T-cell (primary cell): ENCODE measurements at regions of chr14 and their contacts with region 1.

Region 1: GRCh38 chr14:66359500-66359899 is 126.7 kb upstream of the CCDC196 start:
- DNase-seq: peak in 15 of 35 experiments; percentile 0 to 78 (median 13)
- ATAC-seq: peak in 1 of 4 experiments; percentile 34
- H3K4me3 ChIP-seq: no peak overlapping the region
- H3K4me3 Mint-ChIP-seq: no peak overlapping the region
- H3K27ac ChIP-seq: no peak overlapping the region
- H3K27ac Mint-ChIP-seq: no peak overlapping the region
- H3K4me1 ChIP-seq: no peaks in the 10 kb centered on the region
- H3K4me1 Mint-ChIP-seq: no peaks in the 10 kb centered on the region
- H3K27me3 ChIP-seq: no peaks in the 10 kb centered on the region
- H3K27me3 Mint-ChIP-seq: no peaks in the 10 kb centered on the region

Region 2: GRCh38 chr14:66311990-66312389 is 47.5 kb before region 1 on chr14:
- CTCF ChIA-PET with region 1: interaction called in 1 of 2 experiments, 10 read pairs
- POLR2A ChIA-PET with region 1: no interaction called
- DNase-seq: no peak
- ATAC-seq: no peak
- H3K4me3 ChIP-seq: no peak overlapping the region
- H3K4me3 Mint-ChIP-seq: no peak overlapping the region
- H3K27ac ChIP-seq: no peak overlapping the region
- H3K27ac Mint-ChIP-seq: no peak overlapping the region
- H3K4me1 ChIP-seq: no peaks in the 10 kb centered on the region
- H3K4me1 Mint-ChIP-seq: no peaks in the 10 kb centered on the region
- H3K27me3 ChIP-seq: peaks cover 0 to 6% of the 10 kb centered on the region in 2 experiments
- H3K27me3 Mint-ChIP-seq: peaks cover 0 to 4% of the 10 kb centered on the region in 2 donors

Region 3: GRCh38 chr14:66403183-66403582 is 43.7 kb after region 1 on chr14:
- CTCF ChIA-PET with region 1: interaction called, 8 to 26 read pairs
- POLR2A ChIA-PET with region 1: no interaction called
- DNase-seq: peak in 1 of 35 experiments; percentile 40
- ATAC-seq: peak in 3 of 4 experiments; percentile 30 to 48 (median 35)
- H3K4me3 ChIP-seq: no peak overlapping the region
- H3K4me3 Mint-ChIP-seq: no peak overlapping the region
- H3K27ac ChIP-seq: no peak overlapping the region
- H3K27ac Mint-ChIP-seq: no peak overlapping the region
- H3K4me1 ChIP-seq: no peaks in the 10 kb centered on the region
- H3K4me1 Mint-ChIP-seq: no peaks in the 10 kb centered on the region
- H3K27me3 ChIP-seq: no peaks in the 10 kb centered on the region
- H3K27me3 Mint-ChIP-seq: no peaks in the 10 kb centered on the region

Region 4: GRCh38 chr14:66413901-66414300 is 54.4 kb after region 1 on chr14:
- CTCF ChIA-PET with region 1: no interaction called
- POLR2A ChIA-PET with region 1: no interaction called
- DNase-seq: no peak
- ATAC-seq: no peak
- H3K4me3 ChIP-seq: no peak overlapping the region
- H3K4me3 Mint-ChIP-seq: no peak overlapping the region
- H3K27ac ChIP-seq: no peak overlapping the region
- H3K27ac Mint-ChIP-seq: no peak overlapping the region
- H3K4me1 ChIP-seq: no peaks in the 10 kb centered on the region
- H3K4me1 Mint-ChIP-seq: no peaks in the 10 kb centered on the region
- H3K27me3 ChIP-seq: no peaks in the 10 kb centered on the region
- H3K27me3 Mint-ChIP-seq: no peaks in the 10 kb centered on the region

Region 5: DNA sequence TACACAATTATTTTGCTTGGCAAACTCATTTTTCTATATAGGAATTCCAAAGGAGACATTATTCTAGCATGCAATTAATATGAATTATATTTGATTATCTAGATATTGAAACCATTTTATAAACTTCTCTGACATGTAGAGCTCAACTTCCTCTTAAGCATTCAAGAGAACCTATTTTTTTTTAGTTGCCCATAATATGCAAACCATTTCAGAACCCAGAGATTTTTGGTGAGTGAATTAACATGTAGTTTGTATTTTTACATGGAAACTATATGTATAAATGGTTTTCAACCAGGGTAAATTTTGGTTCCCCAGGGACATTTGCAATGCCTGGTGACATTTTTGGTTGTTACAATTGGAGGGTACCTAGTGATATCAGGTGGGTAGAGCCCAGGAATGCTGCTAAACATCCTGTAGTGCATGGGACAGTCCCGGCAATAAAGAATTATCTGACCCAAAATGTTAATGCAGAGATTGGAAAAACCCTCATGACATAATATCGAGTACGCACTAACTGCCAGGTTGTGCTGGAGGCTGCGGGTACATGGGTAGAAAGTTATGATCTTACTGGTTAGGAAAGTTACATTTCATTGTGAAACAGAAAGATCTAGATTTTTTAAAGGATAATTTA is 490.9 kb after region 1 on chr14:
- CTCF ChIA-PET with region 1: interaction called in 1 of 2 experiments, 10 read pairs
- POLR2A ChIA-PET with region 1: no interaction called
- DNase-seq: no peak
- ATAC-seq: no peak
- H3K4me3 ChIP-seq: no peak overlapping the region
- H3K4me3 Mint-ChIP-seq: no peak overlapping the region
- H3K27ac ChIP-seq: no peak overlapping the region
- H3K27ac Mint-ChIP-seq: no peak overlapping the region
- H3K4me1 ChIP-seq: no peaks in the 10 kb centered on the region
- H3K4me1 Mint-ChIP-seq: no peaks in the 10 kb centered on the region
- H3K27me3 ChIP-seq: no peaks in the 10 kb centered on the region
- H3K27me3 Mint-ChIP-seq: no peaks in the 10 kb centered on the region

Region 6: DNA sequence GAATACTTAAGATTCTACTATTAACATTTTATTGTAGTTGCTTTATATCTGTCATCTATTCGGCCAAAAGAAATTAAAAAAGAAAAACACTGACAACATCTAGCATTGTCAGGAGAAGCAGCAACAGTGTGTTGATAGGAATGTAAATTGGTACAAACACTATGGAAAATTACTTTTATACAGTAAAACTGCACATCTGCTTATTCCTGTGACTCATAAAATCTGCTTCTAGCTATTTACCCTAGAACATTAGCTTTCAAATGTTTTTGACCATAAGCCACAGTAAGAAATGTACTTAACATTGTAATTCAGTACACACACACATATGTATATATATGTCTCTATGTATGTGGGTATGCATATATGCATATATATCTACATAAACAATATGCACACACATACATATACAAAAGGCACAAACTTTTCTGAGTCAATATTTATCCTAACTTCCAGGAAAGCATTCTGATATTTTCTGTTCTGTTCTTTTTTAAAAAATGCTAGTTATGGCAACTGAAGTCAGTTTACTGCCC is 550.9 kb after region 1 on chr14:
- CTCF ChIA-PET with region 1: no interaction called
- POLR2A ChIA-PET with region 1: no interaction called
- DNase-seq: no peak
- ATAC-seq: no peak
- H3K4me3 ChIP-seq: no peak overlapping the region
- H3K4me3 Mint-ChIP-seq: no peak overlapping the region
- H3K27ac ChIP-seq: no peak overlapping the region
- H3K27ac Mint-ChIP-seq: no peak overlapping the region
- H3K4me1 ChIP-seq: no peaks in the 10 kb centered on the region
- H3K4me1 Mint-ChIP-seq: no peaks in the 10 kb centered on the region
- H3K27me3 ChIP-seq: no peaks in the 10 kb centered on the region
- H3K27me3 Mint-ChIP-seq: no peaks in the 10 kb centered on the region

Region 7: GRCh38 chr14:67704484-67705089 is 1345.1 kb after region 1 on chr14:
- CTCF ChIA-PET with region 1: interaction called in 1 of 2 experiments, 13 read pairs
- POLR2A ChIA-PET with region 1: no interaction called
- DNase-seq: peak in 19 of 35 experiments; percentile 4 to 79 (median 15)
- ATAC-seq: peak; percentile 67 to 82 (median 80)
- H3K4me3 ChIP-seq: no peak overlapping the region
- H3K4me3 Mint-ChIP-seq: no peak overlapping the region
- H3K27ac ChIP-seq: no peak overlapping the region
- H3K27ac Mint-ChIP-seq: no peak overlapping the region
- H3K4me1 ChIP-seq: no peaks in the 10 kb centered on the region
- H3K4me1 Mint-ChIP-seq: no peaks in the 10 kb centered on the region
- H3K27me3 ChIP-seq: no peaks in the 10 kb centered on the region
- H3K27me3 Mint-ChIP-seq: peaks cover 5% of the 10 kb centered on the region in 2 donors